ENCODE measurements at regions of chr1 and their contacts with region 1.

Region 1: DNA sequence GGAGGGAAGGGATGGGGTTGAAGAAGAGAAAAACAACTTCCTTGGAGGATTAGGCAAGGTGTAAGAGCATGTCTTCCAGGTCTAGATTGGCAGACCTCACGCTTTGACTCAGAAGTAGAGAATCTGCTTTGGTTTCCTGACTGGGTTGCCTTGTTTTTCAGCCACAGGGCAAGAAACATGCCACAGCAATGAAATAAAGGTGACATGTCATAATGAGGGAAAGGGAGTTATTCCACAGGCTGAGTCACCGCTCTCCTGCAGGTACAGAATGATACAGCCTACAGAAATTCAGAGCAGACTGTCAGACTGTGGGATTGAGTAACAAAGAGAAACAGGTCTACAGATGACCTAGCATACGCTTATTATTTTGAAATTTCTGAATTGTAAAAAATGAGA is 45.3 kb downstream of the IRF2BP2 start:
- DNase-seq: peak; percentile 100
- H3K4me3 ChIP-seq: no peak overlapping the region
- H3K27ac ChIP-seq: peak overlapping the region; percentile 99
- H3K4me1 ChIP-seq: peaks cover 22% of the 10 kb centered on the region
- H3K27me3 ChIP-seq: no peaks in the 10 kb centered on the region
- CTCF ChIP-seq: no peak

Region 2: DNA sequence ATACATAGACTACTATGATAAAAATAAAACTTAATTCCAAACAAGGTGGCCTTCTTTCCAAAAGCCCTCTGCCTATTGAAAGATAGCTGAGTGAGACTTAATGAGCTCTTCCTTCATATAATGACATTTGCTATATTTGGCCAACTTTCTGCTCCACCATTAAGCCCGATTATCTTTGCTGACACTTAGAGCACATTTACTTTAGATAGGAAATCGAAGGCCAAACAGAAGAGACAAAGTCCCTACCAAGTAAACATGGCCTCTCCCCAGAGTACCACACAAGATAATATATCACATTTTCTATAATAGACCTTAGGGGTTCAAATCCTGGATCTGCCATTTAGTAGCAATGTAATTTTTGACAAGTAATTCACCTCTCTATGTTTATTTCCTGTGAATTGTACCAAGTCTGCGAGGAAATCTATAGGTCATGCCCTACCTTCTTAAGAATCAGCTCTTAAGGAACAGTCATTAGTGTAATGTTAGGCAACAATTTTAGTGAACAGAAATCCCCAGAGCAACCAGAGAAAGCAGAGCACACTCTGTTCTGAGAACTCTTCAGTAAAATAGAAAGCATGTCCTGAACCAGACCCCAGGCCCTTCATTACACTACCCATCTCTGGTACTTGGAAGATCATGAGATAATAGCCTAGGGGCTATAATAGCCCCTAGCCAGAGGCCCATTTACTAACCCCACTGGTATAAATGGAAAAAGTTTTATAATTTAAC is 208.7 kb before region 1 on chr1:
- CTCF ChIA-PET with region 1: no interaction called
- dilution Hi-C with region 1: no loop called
- in situ Hi-C with region 1: no loop called
- intact Hi-C with region 1: no loop called
- DNase-seq: no peak
- H3K4me3 ChIP-seq: peak overlapping the region in 2 of 3 experiments; percentile 41 to 63
- H3K27ac ChIP-seq: no peak overlapping the region
- H3K4me1 ChIP-seq: no peaks in the 10 kb centered on the region
- H3K27me3 ChIP-seq: no peaks in the 10 kb centered on the region
- CTCF ChIP-seq: no peak

Region 3: DNA sequence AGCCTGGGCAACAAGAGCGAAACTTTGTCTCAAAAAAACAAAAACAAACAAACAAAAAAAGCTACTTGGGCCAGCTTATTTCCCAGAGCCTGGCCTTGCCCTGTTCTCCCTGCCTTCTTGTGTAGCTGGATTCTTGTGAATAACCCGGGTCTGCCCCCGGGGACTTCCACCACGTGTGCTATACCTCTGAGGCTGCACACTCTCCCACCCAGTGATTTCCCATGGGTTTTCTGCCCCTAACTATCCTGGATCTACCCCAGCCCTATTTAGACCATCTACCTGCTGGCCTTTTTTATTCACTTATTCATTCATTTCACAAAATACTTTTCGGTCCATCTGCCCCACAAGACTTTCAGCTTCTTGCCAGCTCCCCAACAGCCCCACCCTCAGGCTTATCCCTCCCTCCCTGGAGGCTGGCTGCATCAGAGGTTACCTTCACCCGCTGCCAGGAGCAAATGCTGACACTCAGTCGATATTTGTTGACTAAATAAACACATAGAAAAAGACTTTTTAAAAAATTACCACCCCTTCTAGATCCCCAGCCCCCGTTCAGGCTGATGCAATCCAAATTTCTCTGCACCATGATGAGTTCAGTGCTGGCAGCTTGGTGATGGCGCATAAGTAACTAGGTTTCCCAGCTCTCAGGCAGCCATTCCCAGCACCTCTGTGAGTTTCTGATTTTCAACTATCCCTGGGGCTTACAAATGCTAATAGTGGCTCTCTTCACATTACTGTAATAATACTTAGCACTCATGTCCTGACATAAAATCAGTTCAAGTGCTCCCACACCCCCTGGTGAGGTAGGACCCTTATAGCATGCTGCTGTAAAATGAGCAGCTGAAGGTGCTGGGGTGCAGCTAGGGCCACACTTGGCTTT is 55.0 kb before region 1 on chr1:
- CTCF ChIA-PET with region 1: no interaction called
- dilution Hi-C with region 1: no loop called
- in situ Hi-C with region 1: no loop called
- intact Hi-C with region 1: loop called (anchors 1 kb)
- DNase-seq: no peak
- H3K4me3 ChIP-seq: no peak overlapping the region
- H3K27ac ChIP-seq: no peak overlapping the region
- H3K4me1 ChIP-seq: peaks cover 22% of the 10 kb centered on the region
- H3K27me3 ChIP-seq: no peaks in the 10 kb centered on the region
- CTCF ChIP-seq: no peak

Region 4: GRCh38 chr1:234533975-234534876 is 30.4 kb before region 1 on chr1:
- CTCF ChIA-PET with region 1: no interaction called
- dilution Hi-C with region 1: no loop called
- in situ Hi-C with region 1: no loop called
- intact Hi-C with region 1: loop called (anchors 1 kb)
- DNase-seq: peak; percentile 69
- H3K4me3 ChIP-seq: no peak overlapping the region
- H3K27ac ChIP-seq: peak overlapping the region; percentile 98
- H3K4me1 ChIP-seq: peaks cover 70% of the 10 kb centered on the region
- H3K27me3 ChIP-seq: no peaks in the 10 kb centered on the region
- CTCF ChIP-seq: no peak

Region 5: GRCh38 chr1:234544087-234544579 is 20.5 kb before region 1 on chr1:
- CTCF ChIA-PET with region 1: no interaction called
- dilution Hi-C with region 1: no loop called
- in situ Hi-C with region 1: no loop called
- intact Hi-C with region 1: loop called (anchors 1 kb)
- DNase-seq: peak; percentile 77
- H3K4me3 ChIP-seq: no peak overlapping the region
- H3K27ac ChIP-seq: no peak overlapping the region
- H3K4me1 ChIP-seq: peaks cover 29% of the 10 kb centered on the region
- H3K27me3 ChIP-seq: no peaks in the 10 kb centered on the region
- CTCF ChIP-seq: no peak

Region 6: GRCh38 chr1:234589854-234590620 is 25.4 kb after region 1 on chr1:
- CTCF ChIA-PET with region 1: no interaction called
- dilution Hi-C with region 1: no loop called
- in situ Hi-C with region 1: no loop called
- intact Hi-C with region 1: loop called (anchors 2 kb)
- DNase-seq: peak; percentile 78
- H3K4me3 ChIP-seq: no peak overlapping the region
- H3K27ac ChIP-seq: peak overlapping the region; percentile 64
- H3K4me1 ChIP-seq: peaks cover 22% of the 10 kb centered on the region
- H3K27me3 ChIP-seq: no peaks in the 10 kb centered on the region
- CTCF ChIP-seq: no peak

Region 7: GRCh38 chr1:234599617-234600417 is 35.2 kb after region 1 on chr1:
- CTCF ChIA-PET with region 1: no interaction called
- dilution Hi-C with region 1: no loop called
- in situ Hi-C with region 1: no loop called
- intact Hi-C with region 1: loop called (anchors 1 kb)
- DNase-seq: peak; percentile 87
- H3K4me3 ChIP-seq: peak overlapping the region; percentile 53 to 60 (median 55)
- H3K27ac ChIP-seq: peak overlapping the region; percentile 88
- H3K4me1 ChIP-seq: peaks cover 42% of the 10 kb centered on the region
- H3K27me3 ChIP-seq: no peaks in the 10 kb centered on the region
- CTCF ChIP-seq: no peak

Region 8: GRCh38 chr1:234709473-234710228 is 145.0 kb after region 1 on chr1:
- CTCF ChIA-PET with region 1: no interaction called
- dilution Hi-C with region 1: no loop called
- in situ Hi-C with region 1: no loop called
- intact Hi-C with region 1: no loop called
- DNase-seq: no peak
- H3K4me3 ChIP-seq: no peak overlapping the region
- H3K27ac ChIP-seq: no peak overlapping the region
- H3K4me1 ChIP-seq: peaks cover 15% of the 10 kb centered on the region
- H3K27me3 ChIP-seq: no peaks in the 10 kb centered on the region
- CTCF ChIP-seq: no peak

Measured in mammary epithelial cell (primary cell).